RWPE1 (cell line): ENCODE measurements at regions of chr12 and their contacts with region 1.

Region 1: DNA sequence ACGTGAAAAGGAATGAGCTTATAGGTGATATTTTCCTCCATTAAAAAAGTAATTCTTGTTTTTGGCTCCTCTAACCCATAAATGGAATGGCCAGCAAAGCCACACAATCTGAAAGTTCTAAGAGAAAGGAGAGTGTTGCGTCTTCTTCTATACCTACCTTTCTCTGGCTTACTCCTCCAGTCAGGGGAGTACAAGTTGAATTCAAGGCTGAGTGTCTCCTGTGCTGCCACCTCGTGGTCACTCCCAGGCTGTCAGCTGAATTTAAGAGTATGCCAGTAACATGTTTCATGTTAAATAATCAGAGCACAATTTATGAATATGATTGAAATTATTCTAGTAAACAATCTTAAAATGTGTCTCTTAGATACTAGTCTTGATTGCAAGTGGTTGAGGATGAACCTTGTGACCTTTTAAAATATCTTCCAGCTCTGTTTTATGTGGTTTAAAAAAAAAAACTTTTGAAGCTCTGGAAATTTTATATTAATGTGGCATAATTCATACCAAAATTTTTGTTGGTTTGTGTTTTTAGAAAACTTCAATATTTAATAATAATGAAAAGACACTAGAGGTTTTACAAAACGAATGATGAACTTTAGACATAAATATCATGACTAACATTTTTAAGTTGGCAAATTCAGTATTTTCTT is 31.7 kb downstream of the PTHLH start:
- DNase-seq: peak; percentile 67
- H3K27ac ChIP-seq: no peak overlapping the region
- CTCF ChIP-seq: peak; percentile 74

Region 2: GRCh38 chr12:27743601-27744000 is 197.3 kb before region 1 on chr12:
- CTCF ChIA-PET with region 1: interaction called, 10 read pairs
- POLR2A ChIA-PET with region 1: no interaction called
- DNase-seq: no peak
- H3K27ac ChIP-seq: no peak overlapping the region
- CTCF ChIP-seq: no peak

Region 3: DNA sequence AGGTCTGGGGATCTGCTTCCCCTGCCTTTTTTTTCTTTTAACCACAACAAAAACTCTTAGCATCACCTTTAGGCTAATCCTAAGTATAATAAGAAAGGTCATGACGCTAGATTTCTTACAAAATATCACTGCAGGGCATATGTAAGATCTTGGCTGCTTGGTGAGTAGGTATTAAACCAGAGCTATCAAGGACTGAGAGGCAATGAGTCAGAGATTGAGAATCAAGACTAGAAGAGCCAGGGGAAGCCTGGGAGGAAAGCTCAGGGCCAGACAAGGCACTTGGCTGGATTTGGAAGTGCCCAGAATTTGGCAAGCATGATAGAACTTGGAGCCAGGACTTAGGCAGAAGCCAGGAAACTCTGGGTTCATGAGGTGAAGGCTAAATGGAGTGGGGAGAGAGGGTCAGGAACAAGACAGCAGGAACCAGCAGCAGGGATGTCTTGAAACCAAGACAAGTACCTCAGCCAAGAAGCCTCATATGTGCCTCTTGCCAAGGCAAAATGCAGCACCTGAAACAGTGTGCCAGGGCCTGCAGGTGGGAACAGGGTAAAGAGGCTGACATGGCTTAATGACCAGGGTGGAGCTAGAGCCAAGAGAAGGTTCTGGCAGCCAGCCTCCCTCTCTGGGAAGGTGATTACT is 18.3 kb before region 1 on chr12:
- CTCF ChIA-PET with region 1: no interaction called
- POLR2A ChIA-PET with region 1: no interaction called
- DNase-seq: peak; percentile 75
- H3K27ac ChIP-seq: peak overlapping the region; percentile 60
- CTCF ChIP-seq: no peak

Region 4: GRCh38 chr12:28127455-28127854 is 186.6 kb after region 1 on chr12:
- CTCF ChIA-PET with region 1: no interaction called
- POLR2A ChIA-PET with region 1: no interaction called
- DNase-seq: peak; percentile 24
- H3K27ac ChIP-seq: no peak overlapping the region
- CTCF ChIP-seq: no peak